Activated naive CD4-positive, alpha-beta T cell treated with anti-CD3 and anti-CD28 coated beads for 36 hours (primary cell): ENCODE measurements at regions of chr7 and their contacts with region 1.

Region 1: GRCh38 chr7:150556521-150557138 is 10.6 kb upstream of the GIMAP4 start:
- DNase-seq: no peak
- H3K4me3 Mint-ChIP-seq: peak overlapping the region; percentile 69
- H3K27ac Mint-ChIP-seq: peak overlapping the region; percentile 86
- H3K4me1 Mint-ChIP-seq: peaks cover 82% of the 10 kb centered on the region
- H3K27me3 Mint-ChIP-seq: no peaks in the 10 kb centered on the region

Region 2: DNA sequence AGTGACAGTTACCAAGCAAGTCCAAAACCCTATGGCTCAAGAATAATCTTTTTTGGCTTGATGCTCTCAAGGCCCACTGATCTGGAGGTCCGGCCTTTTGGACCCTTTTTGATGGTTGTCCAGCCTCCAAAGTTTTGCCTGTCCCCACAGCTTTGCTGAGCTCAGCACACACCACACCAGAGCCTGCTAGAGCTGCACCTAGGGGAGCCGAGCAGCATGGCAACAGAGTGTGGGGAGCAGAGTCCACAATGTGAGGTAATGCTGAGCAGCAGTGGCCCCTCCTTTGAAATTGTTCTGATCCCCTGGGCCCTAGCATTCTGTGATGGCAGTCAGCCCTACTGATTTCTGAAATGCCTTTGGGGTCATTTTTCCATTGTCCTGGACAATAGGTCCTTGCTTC is 32.6 kb before region 1 on chr7:
- CTCF ChIA-PET with region 1: interaction called, 5 read pairs
- intact Hi-C with region 1: loop called (anchors 1 kb)
- DNase-seq: peak; percentile 46
- H3K4me3 Mint-ChIP-seq: no peak overlapping the region
- H3K27ac Mint-ChIP-seq: peak overlapping the region; percentile 82
- H3K4me1 Mint-ChIP-seq: peaks cover 60% of the 10 kb centered on the region
- H3K27me3 Mint-ChIP-seq: no peaks in the 10 kb centered on the region

Region 3: GRCh38 chr7:151244196-151244840 is 687.7 kb after region 1 on chr7:
- CTCF ChIA-PET with region 1: no interaction called
- intact Hi-C with region 1: no loop called
- DNase-seq: peak; percentile 81
- H3K4me3 Mint-ChIP-seq: peak overlapping the region; percentile 46
- H3K27ac Mint-ChIP-seq: no peak overlapping the region
- H3K4me1 Mint-ChIP-seq: peaks cover 41% of the 10 kb centered on the region
- H3K27me3 Mint-ChIP-seq: peaks cover 26% of the 10 kb centered on the region